ENCODE measurements at regions of chr5 and their contacts with region 1.

Region 1: GRCh38 chr5:62606878-62607277 is 28.3 kb downstream of the LRRC70 start:
- DNase-seq: no peak
- H3K4me3 ChIP-seq: no peak overlapping the region
- H3K27ac ChIP-seq: no peak overlapping the region
- H3K4me1 ChIP-seq: no peaks in the 10 kb centered on the region
- H3K27me3 ChIP-seq: no peaks in the 10 kb centered on the region
- CTCF ChIP-seq: no peak

Region 2: DNA sequence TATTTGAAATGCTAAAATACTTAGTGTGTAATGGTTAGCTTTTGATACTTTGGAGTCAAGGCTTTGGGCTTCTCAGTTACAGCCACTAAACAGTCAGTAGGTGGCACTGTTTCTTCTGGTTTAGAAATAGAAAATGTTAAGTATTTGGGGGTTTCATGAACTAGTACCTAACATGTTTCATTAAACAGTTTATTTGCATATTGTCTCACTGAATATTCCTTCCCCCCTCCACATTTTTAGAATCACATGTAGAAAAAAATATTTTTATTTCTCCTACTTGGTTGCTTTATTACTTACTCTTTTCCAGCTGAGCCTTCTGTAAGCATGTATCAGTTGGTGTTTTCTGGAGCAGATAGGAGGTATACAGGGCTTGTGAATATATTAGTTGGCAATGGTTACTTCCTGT is 146.3 kb before region 1 on chr5:
- CTCF ChIA-PET with region 1: no interaction called
- POLR2A ChIA-PET with region 1: no interaction called
- intact Hi-C with region 1: loop called (anchors 10 kb)
- DNase-seq: no peak
- H3K4me3 ChIP-seq: no peak overlapping the region
- H3K27ac ChIP-seq: no peak overlapping the region
- H3K4me1 ChIP-seq: no peaks in the 10 kb centered on the region
- H3K27me3 ChIP-seq: no peaks in the 10 kb centered on the region
- CTCF ChIP-seq: peak; percentile 83

Region 3: DNA sequence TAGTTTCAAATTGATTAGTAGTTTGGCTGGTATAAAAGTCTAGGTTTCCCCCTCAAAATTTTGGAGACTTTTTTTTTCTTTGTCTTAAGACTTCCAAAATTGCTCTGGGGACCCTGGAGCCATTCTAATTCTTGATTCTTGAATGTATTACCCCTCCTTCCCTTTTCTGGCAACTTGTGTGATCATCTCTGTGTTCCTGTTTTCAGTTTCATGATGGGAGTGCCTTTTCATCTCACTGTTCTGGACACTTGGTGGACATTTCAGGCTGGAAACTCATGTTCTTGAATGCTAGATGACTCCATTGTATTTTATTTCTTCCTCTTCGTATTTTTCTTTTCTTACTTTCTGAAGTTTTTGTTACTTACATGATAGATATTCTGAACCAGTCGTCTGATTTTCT is 85.6 kb before region 1 on chr5:
- CTCF ChIA-PET with region 1: no interaction called
- POLR2A ChIA-PET with region 1: no interaction called
- intact Hi-C with region 1: loop called (anchors 10 kb)
- DNase-seq: no peak
- H3K4me3 ChIP-seq: no peak overlapping the region
- H3K27ac ChIP-seq: no peak overlapping the region
- H3K4me1 ChIP-seq: no peaks in the 10 kb centered on the region
- H3K27me3 ChIP-seq: no peaks in the 10 kb centered on the region
- CTCF ChIP-seq: no peak

Region 4: GRCh38 chr5:63346451-63346850 is 739.6 kb after region 1 on chr5:
- CTCF ChIA-PET with region 1: no interaction called
- POLR2A ChIA-PET with region 1: no interaction called
- intact Hi-C with region 1: no loop called
- DNase-seq: no peak
- H3K4me3 ChIP-seq: no peak overlapping the region
- H3K27ac ChIP-seq: no peak overlapping the region
- H3K4me1 ChIP-seq: no peaks in the 10 kb centered on the region
- H3K27me3 ChIP-seq: no peaks in the 10 kb centered on the region
- CTCF ChIP-seq: no peak